ENCODE measurements at regions of chr1 and their contacts with region 1.

Region 1: GRCh38 chr1:244970661-244971551 is 106.6 kb upstream of the HNRNPU start:
- DNase-seq: peak; percentile 96
- H3K4me3 ChIP-seq: peak overlapping the region; percentile 85
- H3K27ac ChIP-seq: peak overlapping the region; percentile 97
- H3K4me1 ChIP-seq: peaks cover 30% of the 10 kb centered on the region
- CTCF ChIP-seq: peak; percentile 75

Region 2: GRCh38 chr1:244451951-244452795 is 518.7 kb before region 1 on chr1:
- CTCF ChIA-PET with region 1: no interaction called
- POLR2A ChIA-PET with region 1: no interaction called
- intact Hi-C with region 1: loop called (anchors 5 kb)
- DNase-seq: peak; percentile 100
- H3K4me3 ChIP-seq: peak overlapping the region; percentile 98
- H3K27ac ChIP-seq: peak overlapping the region; percentile 85
- H3K4me1 ChIP-seq: peaks cover 32% of the 10 kb centered on the region
- CTCF ChIP-seq: peak; percentile 71

Region 3: DNA sequence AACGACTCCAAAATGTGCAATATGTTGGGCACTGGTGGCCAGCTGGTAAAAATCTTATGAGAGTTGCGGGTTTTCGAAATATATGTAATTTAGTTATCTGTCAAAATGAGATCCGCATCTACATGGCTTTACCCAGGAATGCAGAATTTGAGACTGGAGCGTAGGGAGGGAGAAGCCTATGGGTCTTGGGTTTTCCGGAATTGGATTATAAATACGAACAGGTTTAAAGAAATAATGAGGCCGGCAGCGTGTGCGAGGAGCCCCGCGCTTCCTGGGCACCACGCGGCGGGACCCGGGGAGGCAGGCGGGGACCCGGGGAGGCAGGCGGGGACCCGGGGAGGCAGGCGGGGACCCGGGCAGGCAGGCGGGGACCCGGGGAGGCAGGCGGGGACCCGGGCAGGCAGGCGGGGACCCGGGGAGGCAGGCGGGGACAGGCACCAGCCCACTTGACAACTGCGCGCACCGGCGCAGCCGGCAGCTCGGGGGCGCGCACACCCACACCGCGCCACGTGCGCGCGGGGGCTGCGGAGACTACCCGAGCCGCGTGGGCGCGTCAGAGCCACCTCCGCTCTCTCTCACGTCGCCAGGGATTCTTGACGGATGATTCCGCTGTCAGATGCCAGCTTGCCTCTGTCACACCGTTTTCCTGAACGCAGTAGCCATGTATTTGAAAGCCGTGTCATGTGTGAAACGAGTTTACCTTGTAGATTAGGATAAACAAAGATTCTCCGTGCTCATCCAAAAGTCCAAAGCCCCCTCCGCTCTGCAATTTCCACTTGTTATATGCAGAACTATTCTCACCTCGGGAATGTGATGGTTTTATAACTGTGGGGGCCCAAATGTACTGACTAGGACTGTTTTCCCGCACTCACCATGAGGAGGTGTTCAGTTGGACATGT is 52.2 kb before region 1 on chr1:
- CTCF ChIA-PET with region 1: no interaction called
- POLR2A ChIA-PET with region 1: interaction called, 11 read pairs
- intact Hi-C with region 1: loop called (anchors 1 kb)
- DNase-seq: peak; percentile 73
- H3K4me3 ChIP-seq: peak overlapping the region; percentile 62
- H3K27ac ChIP-seq: peak overlapping the region; percentile 89
- H3K4me1 ChIP-seq: peaks cover 52% of the 10 kb centered on the region
- CTCF ChIP-seq: peak; percentile 33; the same call in 1 of the 2 replicates

Region 4: GRCh38 chr1:244958593-244958992 is 12.3 kb before region 1 on chr1:
- CTCF ChIA-PET with region 1: interaction called, 3 read pairs
- POLR2A ChIA-PET with region 1: interaction called, 22 read pairs
- intact Hi-C with region 1: no loop called
- DNase-seq: no peak
- H3K4me3 ChIP-seq: no peak overlapping the region
- H3K27ac ChIP-seq: peak overlapping the region; percentile 70
- H3K4me1 ChIP-seq: peaks cover 20% of the 10 kb centered on the region
- CTCF ChIP-seq: no peak

Region 5: DNA sequence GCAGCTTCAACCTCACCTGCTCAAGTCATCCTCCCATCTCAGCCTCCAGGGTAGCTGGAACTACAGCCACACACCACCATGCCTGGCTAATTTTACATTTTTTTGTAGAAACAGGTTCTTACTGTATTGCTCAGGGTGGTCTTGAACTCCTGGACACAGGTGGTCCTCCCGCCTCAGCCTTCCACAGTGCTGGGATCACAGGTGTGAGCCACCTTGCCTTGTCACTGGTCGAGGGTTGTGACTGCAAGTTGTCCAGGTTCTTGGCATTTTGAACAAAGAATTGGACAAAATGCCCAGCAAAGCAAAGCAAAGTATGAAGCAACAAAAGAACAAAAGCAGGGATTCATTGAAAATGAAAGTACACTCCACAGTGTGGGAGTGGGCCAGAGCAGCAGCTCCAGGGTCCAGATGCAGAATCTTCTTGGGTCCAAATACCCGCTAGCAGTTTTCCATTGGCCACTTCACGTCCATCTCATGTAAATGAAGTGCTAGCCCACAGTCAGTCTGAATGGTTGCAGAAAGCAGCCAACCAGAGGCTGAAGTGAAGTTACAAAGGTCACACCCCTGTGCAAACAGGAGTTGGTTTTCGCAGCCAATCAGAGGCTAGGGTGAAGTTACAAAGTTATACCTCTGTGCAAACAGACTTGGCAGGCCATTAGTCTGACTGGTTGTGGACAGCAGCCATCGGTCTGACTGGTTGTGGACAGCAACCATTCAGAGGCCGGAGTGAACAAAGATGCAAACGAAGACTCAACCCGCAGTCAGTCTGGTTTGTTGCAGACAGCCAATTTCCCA is 74.4 kb after region 1 on chr1:
- CTCF ChIA-PET with region 1: no interaction called
- POLR2A ChIA-PET with region 1: interaction called, 8 read pairs
- intact Hi-C with region 1: loop called (anchors 1 kb)
- DNase-seq: no peak
- H3K4me3 ChIP-seq: no peak overlapping the region
- H3K27ac ChIP-seq: no peak overlapping the region
- H3K4me1 ChIP-seq: peaks cover 8% of the 10 kb centered on the region
- CTCF ChIP-seq: no peak

Measured in OCI-LY7 (cell line).